HAP-1 (cell line): ENCODE measurements at regions of chr5 and their contacts with region 1.

Region 1: GRCh38 chr5:141040771-141041426 is 10.3 kb upstream of the PCDHB1 start:
- DNase-seq: peak; percentile 69 to 96
- H3K4me3 ChIP-seq: no peak overlapping the region
- H3K4me1 ChIP-seq: peaks cover 14% of the 10 kb centered on the region
- H3K27me3 ChIP-seq: no peaks in the 10 kb centered on the region

Region 2: DNA sequence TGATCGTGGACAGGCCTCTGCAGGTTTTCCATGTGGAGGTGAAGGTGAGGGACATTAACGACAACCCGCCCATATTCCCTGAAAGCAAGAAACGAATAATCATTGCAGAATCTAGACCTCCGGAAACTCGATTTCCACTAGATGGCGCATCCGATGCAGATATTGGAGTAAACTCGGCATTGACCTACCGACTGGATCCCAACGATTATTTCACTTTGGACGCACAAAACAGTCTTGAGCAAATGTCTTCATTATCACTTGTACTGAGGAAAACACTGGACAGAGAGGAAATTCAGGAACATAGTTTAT is 158.4 kb before region 1 on chr5:
- in situ Hi-C with region 1: loop called (anchors 5 kb)
- DNase-seq: peak; percentile 25 to 71
- H3K4me3 ChIP-seq: no peak overlapping the region
- H3K4me1 ChIP-seq: no peaks in the 10 kb centered on the region
- H3K27me3 ChIP-seq: peaks cover 12% of the 10 kb centered on the region

Region 3: GRCh38 chr5:141272906-141273305 is 232.0 kb after region 1 on chr5:
- in situ Hi-C with region 1: no loop called
- DNase-seq: peak in 1 of 2 experiments; percentile 12
- H3K4me3 ChIP-seq: no peak overlapping the region
- H3K4me1 ChIP-seq: no peaks in the 10 kb centered on the region
- H3K27me3 ChIP-seq: no peaks in the 10 kb centered on the region